Activated CD4-positive, alpha-beta T cell treated with anti-CD3 and anti-CD28 coated beads, Interleukin-2, amount 10 ng/mL, durations not matched to agents 24 days and 14 days (primary cell): ENCODE measurements at regions of chr6 and their contacts with region 1.

Region 1: GRCh38 chr6:118843685-118844390 is 50.1 kb upstream of the ASF1A start:
- DNase-seq: peak; percentile 73
- H3K4me3 Mint-ChIP-seq: peak overlapping the region; percentile 59
- H3K27ac Mint-ChIP-seq: peak overlapping the region; percentile 72
- H3K4me1 Mint-ChIP-seq: peaks cover 22% of the 10 kb centered on the region
- H3K27me3 Mint-ChIP-seq: no peaks in the 10 kb centered on the region

Region 2: GRCh38 chr6:118800394-118801071 is 43.3 kb before region 1 on chr6:
- intact Hi-C with region 1: loop called (anchors 2 kb)
- DNase-seq: peak; percentile 95
- H3K4me3 Mint-ChIP-seq: peak overlapping the region; percentile 60
- H3K27ac Mint-ChIP-seq: peak overlapping the region; percentile 51
- H3K4me1 Mint-ChIP-seq: peaks cover 30% of the 10 kb centered on the region
- H3K27me3 Mint-ChIP-seq: no peaks in the 10 kb centered on the region

Region 3: GRCh38 chr6:118810420-118811027 is 33.3 kb before region 1 on chr6:
- intact Hi-C with region 1: loop called (anchors 1 kb)
- DNase-seq: peak; percentile 87
- H3K4me3 Mint-ChIP-seq: peak overlapping the region; percentile 34
- H3K27ac Mint-ChIP-seq: peak overlapping the region; percentile 74
- H3K4me1 Mint-ChIP-seq: peaks cover 47% of the 10 kb centered on the region
- H3K27me3 Mint-ChIP-seq: no peaks in the 10 kb centered on the region

Region 4: DNA sequence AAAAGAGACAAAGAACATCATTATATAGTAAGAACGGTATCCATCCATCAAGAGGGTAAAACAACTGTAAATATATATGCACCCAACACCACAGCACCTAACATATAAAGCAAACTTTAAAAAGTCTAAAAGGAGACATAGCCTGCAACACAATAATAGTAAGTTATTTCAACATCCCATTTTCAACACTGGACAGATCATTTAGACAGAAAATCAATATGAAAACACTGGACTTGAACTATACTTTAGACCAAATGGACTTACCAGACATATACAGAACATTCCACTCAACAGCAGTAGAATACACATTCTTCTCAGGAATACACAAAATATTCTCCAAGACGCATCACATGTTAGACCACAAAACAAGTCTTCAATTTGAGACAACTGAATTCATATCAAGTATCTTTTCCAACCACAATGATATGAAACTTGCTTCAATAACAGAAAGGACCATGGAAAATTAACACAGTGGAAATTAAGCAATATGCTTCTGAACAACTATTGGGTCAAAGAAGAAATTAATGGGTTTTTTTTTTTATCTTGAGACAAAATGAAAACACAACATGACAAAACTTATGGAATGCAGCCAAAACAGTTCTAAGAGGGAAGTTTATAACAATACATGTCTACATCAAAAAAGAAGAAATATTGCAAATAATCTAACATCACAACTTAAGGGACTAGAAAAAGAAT is 26.2 kb after region 1 on chr6:
- intact Hi-C with region 1: loop called (anchors 1 kb)
- DNase-seq: no peak
- H3K4me3 Mint-ChIP-seq: no peak overlapping the region
- H3K27ac Mint-ChIP-seq: peak overlapping the region; percentile 71
- H3K4me1 Mint-ChIP-seq: peaks cover 24% of the 10 kb centered on the region
- H3K27me3 Mint-ChIP-seq: no peaks in the 10 kb centered on the region

Region 5: GRCh38 chr6:118902726-118903125 is 58.9 kb after region 1 on chr6:
- intact Hi-C with region 1: no loop called
- DNase-seq: no peak
- H3K4me3 Mint-ChIP-seq: no peak overlapping the region
- H3K27ac Mint-ChIP-seq: peak overlapping the region; percentile 13
- H3K4me1 Mint-ChIP-seq: peaks cover 67% of the 10 kb centered on the region
- H3K27me3 Mint-ChIP-seq: no peaks in the 10 kb centered on the region

Region 6: GRCh38 chr6:118963003-118963402 is 119.2 kb after region 1 on chr6:
- intact Hi-C with region 1: no loop called
- DNase-seq: no peak
- H3K4me3 Mint-ChIP-seq: no peak overlapping the region
- H3K27ac Mint-ChIP-seq: no peak overlapping the region
- H3K4me1 Mint-ChIP-seq: peaks cover 9% of the 10 kb centered on the region
- H3K27me3 Mint-ChIP-seq: no peaks in the 10 kb centered on the region

Region 7: DNA sequence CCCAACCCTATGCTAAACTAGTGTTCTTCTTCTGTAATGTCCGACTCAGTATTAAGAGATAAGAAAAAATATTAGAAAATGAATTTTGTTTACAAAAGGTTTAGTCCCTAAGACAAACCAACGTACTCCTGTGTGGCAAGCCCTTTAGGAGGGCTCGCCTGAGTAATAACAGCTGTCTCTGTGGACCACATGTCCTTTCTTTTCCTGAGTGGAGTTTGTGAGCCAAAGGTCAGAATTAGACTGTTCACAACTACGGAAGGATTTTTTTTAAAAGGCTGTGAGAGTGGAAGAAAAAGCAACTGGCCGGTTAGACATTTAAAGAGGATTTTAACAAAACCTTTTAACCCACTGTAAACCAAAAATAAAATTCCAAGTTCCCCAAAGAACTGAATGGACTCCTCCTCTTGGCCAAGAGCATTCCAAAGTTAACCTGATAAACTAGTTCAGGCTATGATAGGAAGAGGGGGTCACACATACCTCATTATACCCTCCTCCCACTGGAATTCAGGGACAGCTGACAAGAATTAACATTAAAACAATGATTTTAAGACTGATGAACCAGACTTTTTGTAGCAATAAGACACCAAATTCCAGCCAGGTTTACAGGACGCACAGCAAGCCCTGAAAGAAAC is 191.1 kb after region 1 on chr6:
- intact Hi-C with region 1: no loop called
- DNase-seq: no peak
- H3K4me3 Mint-ChIP-seq: no peak overlapping the region
- H3K27ac Mint-ChIP-seq: no peak overlapping the region
- H3K4me1 Mint-ChIP-seq: no peaks in the 10 kb centered on the region
- H3K27me3 Mint-ChIP-seq: no peaks in the 10 kb centered on the region